ENCODE measurements at regions of chr5 and their contacts with region 1.

Region 1: GRCh38 chr5:147466360-147466980 is 43.4 kb downstream of the DPYSL3 start:
- DNase-seq: no peak
- H3K4me3 ChIP-seq: no peak overlapping the region
- H3K27ac ChIP-seq: peak overlapping the region in 1 of 2 donors; percentile 4
- H3K4me1 ChIP-seq: no peaks in the 10 kb centered on the region
- H3K27me3 ChIP-seq: no peaks in the 10 kb centered on the region
- CTCF ChIP-seq: no peak

Region 2: DNA sequence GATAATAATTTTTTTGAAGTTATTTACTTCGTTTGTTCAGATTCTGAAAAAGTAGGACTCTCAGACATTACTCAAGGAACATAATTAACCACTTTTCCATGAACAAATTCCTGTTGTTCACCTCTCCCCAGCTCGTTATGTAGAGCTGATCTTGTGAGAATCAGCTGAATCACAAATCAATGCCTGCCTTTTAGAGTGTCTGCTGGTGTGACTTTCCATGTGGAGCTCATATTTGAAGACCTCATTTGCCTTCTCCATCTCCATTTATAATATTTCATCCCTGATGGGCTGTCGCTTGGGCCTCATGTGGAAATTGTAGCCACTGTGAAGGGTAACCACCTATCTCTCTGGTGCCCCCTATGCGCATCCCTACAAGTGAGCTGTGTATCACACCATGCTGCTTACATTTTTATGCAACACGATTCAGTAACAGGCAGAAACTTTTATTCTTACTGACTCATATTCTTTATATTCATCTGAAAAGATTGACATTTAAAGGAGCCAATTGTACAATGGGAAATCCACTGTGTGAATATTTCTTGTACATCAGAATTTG is 120.4 kb before region 1 on chr5:
- intact Hi-C with region 1: no loop called
- DNase-seq: no peak
- H3K4me3 ChIP-seq: no peak overlapping the region
- H3K27ac ChIP-seq: no peak overlapping the region
- H3K4me1 ChIP-seq: no peaks in the 10 kb centered on the region
- H3K27me3 ChIP-seq: no peaks in the 10 kb centered on the region
- CTCF ChIP-seq: no peak

Region 3: GRCh38 chr5:147558826-147559225 is 92.4 kb after region 1 on chr5:
- intact Hi-C with region 1: loop called (anchors 5 kb)
- DNase-seq: peak; percentile 72 to 76
- H3K4me3 ChIP-seq: no peak overlapping the region
- H3K27ac ChIP-seq: peak overlapping the region in 1 of 2 donors; percentile 27
- H3K4me1 ChIP-seq: peaks cover 0 to 25% (median 13%) of the 10 kb centered on the region in 4 donors
- H3K27me3 ChIP-seq: no peaks in the 10 kb centered on the region
- CTCF ChIP-seq: peak; percentile 67 to 78